ENCODE measurements at regions of chr11 and their contacts with region 1.

Region 1: GRCh38 chr11:75532200-75533048 is 6.7 kb upstream of the GDPD5 start:
- DNase-seq: peak; percentile 43
- H3K4me3 ChIP-seq: no peak overlapping the region
- H3K27ac ChIP-seq: no peak overlapping the region
- H3K4me1 ChIP-seq: peaks cover 3% of the 10 kb centered on the region
- H3K27me3 ChIP-seq: no peaks in the 10 kb centered on the region
- CTCF ChIP-seq: peak; percentile 76 to 88

Region 2: GRCh38 chr11:75270896-75271418 is 261.5 kb before region 1 on chr11:
- CTCF ChIA-PET with region 1: no interaction called
- dilution Hi-C with region 1: no loop called
- in situ Hi-C with region 1: loop called (anchors 10 to 25 kb)
- intact Hi-C with region 1: no loop called
- DNase-seq: no peak
- H3K4me3 ChIP-seq: no peak overlapping the region
- H3K27ac ChIP-seq: no peak overlapping the region
- H3K4me1 ChIP-seq: no peaks in the 10 kb centered on the region
- H3K27me3 ChIP-seq: no peaks in the 10 kb centered on the region
- CTCF ChIP-seq: peak; percentile 38 to 53

Region 3: DNA sequence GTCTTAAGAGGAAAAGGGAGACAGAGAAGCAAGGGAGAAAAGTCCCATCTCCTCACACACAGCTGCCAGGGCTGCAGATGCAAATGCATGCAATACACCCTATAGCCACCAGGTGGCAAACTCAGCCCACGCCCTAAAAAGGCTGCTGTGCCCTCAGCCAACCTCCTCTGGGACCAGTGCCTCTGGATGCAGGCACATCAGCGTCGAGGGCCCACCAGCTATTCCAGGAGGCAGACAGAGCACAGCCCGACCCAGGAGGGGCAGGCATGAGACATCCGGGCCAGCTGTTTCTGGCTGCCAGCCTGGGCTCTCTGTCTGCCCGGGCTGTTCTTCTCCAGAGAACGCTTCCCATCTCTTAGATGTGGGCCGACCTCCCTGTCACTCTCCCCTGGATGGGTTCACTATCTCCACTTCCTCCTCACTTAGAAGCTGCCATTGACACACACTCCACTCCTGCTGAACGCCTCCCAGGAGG is 252.2 kb before region 1 on chr11:
- CTCF ChIA-PET with region 1: no interaction called
- dilution Hi-C with region 1: no loop called
- in situ Hi-C with region 1: loop called (anchors 10 to 25 kb)
- intact Hi-C with region 1: loop called (anchors 2 kb)
- DNase-seq: peak; percentile 51
- H3K4me3 ChIP-seq: no peak overlapping the region
- H3K27ac ChIP-seq: no peak overlapping the region
- H3K4me1 ChIP-seq: no peaks in the 10 kb centered on the region
- H3K27me3 ChIP-seq: no peaks in the 10 kb centered on the region
- CTCF ChIP-seq: peak; percentile 95 to 98

Region 4: DNA sequence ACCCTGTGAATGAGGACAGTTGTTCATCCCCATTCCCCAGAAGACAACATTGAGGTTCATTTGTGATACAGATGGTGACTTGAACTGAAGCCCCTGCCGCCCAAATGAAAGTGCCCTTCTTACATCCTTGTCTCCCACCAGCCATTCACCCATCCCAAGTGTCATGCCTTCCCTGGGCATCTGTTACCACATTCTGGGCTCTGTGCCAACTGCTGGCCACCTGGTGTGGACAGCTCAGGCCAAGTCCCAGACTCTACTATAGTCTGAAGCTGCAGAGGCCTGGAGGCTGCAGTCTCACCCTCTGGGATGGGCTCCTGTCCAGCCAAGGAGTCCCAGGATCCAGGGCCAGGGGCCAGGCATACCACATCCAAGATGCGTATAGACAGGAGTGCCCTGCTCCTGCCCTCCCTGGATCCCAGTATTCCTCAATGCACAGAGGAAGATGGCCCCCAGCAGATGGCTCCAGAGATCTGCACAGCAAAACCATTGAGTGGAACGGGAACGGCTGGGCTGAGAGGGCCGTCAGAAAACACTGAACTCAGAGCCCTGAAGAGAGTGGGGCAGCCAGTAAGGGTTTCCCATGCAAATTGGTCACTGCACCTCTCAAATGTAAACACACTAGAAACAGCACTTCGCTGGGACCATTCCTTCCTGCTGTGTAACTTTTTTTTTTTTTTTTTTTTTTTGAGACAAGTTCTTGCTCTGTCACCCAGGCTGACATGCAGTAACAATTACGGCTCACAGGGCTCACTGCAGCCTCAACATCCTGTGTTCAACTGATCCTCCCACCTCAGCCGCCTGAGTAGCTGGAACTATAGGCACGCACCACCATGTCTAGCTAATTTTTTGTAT is 203.8 kb before region 1 on chr11:
- CTCF ChIA-PET with region 1: no interaction called
- dilution Hi-C with region 1: no loop called
- in situ Hi-C with region 1: no loop called
- intact Hi-C with region 1: loop called (anchors 2 kb)
- DNase-seq: peak; percentile 66
- H3K4me3 ChIP-seq: no peak overlapping the region
- H3K27ac ChIP-seq: no peak overlapping the region
- H3K4me1 ChIP-seq: peaks cover 25% of the 10 kb centered on the region
- H3K27me3 ChIP-seq: no peaks in the 10 kb centered on the region
- CTCF ChIP-seq: peak; percentile 51 to 82

Region 5: DNA sequence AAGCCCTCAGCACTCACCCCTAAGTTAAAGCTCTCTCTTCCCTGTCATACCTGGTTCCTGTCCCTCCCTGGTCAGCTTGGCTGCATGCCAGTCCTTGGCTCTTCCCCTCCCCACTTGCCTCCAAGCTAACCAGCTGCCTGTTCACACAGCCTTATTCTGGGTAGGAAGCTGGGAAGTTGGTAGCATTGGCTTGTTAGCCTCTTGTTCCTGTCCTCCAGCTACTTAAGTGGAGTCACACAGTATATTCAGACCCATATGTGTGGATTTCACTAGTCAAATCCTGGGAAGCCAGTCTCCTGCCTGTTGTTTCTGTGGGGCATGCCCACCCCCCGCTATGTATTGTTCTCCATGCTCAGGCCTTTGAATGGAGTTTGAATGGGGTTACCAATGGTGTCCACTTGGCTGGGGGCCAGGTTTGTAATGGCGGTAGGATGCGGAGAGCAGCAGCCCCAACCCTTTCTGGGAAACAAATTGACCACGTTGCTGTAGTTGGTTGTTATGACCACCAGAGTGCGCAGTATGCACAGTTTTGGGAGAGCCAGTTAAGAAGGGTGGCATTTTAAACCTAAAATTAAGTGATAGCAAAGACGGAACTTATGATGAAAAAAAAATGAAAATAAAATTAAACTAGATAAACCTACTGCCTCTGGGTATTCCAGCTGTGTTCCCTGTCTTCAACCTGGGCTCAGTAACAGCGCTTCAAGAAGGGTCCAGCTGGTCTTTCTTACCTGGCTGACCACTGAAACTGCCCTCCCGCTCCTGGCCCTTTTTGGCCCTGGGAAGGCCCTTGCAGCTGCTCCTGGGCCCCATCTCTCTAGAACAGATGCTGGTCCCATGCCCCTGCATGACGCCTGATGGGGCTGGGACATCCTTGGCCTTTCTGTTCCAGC is 143.8 kb before region 1 on chr11:
- CTCF ChIA-PET with region 1: no interaction called
- dilution Hi-C with region 1: no loop called
- in situ Hi-C with region 1: loop called in 1 of 2 experiments (anchors 10 kb)
- intact Hi-C with region 1: loop called (anchors 1 kb)
- DNase-seq: peak; percentile 61
- H3K4me3 ChIP-seq: no peak overlapping the region
- H3K27ac ChIP-seq: no peak overlapping the region
- H3K4me1 ChIP-seq: peaks cover 5% of the 10 kb centered on the region
- H3K27me3 ChIP-seq: no peaks in the 10 kb centered on the region
- CTCF ChIP-seq: peak; percentile 78

Region 6: GRCh38 chr11:75399344-75400145 is 132.9 kb before region 1 on chr11 and contains the start of gene RPS3:
- CTCF ChIA-PET with region 1: no interaction called
- dilution Hi-C with region 1: no loop called
- in situ Hi-C with region 1: loop called in 1 of 2 experiments (anchors 10 kb)
- intact Hi-C with region 1: no loop called
- DNase-seq: peak; percentile 89
- H3K4me3 ChIP-seq: peak within 1 kb of the TSS; percentile 84 to 90 (median 89)
- H3K27ac ChIP-seq: peak within 1 kb of the TSS; percentile 87
- H3K4me1 ChIP-seq: peaks cover 30% of the 10 kb centered on the region
- H3K27me3 ChIP-seq: no peaks in the 10 kb centered on the region
- CTCF ChIP-seq: peak in 1 of 2 donors; percentile 26
- total RNA-seq, gene RPS3: 1,423 to 2,367 TPM

Region 7: GRCh38 chr11:75445315-75445953 is 87.0 kb before region 1 on chr11:
- CTCF ChIA-PET with region 1: no interaction called
- dilution Hi-C with region 1: no loop called
- in situ Hi-C with region 1: loop called (anchors 5 kb)
- intact Hi-C with region 1: loop called (anchors 1 kb)
- DNase-seq: peak; percentile 27
- H3K4me3 ChIP-seq: no peak overlapping the region
- H3K27ac ChIP-seq: no peak overlapping the region
- H3K4me1 ChIP-seq: peaks cover 8% of the 10 kb centered on the region
- H3K27me3 ChIP-seq: no peaks in the 10 kb centered on the region
- CTCF ChIP-seq: peak; percentile 92 to 98

Measured in mammary epithelial cell (primary cell).